ENCODE measurements at regions of chr5 and their contacts with region 1.

Region 1: GRCh38 chr5:14208071-14209021 is 65.2 kb downstream of the TRIO start:
- DNase-seq: peak; percentile 59
- H3K4me3 ChIP-seq: peak overlapping the region in 1 of 4 donors; percentile 23
- H3K27ac ChIP-seq: peak overlapping the region; percentile 84 to 89 (median 87)
- H3K4me1 ChIP-seq: peaks cover 44 to 97% (median 85%) of the 10 kb centered on the region in 4 donors
- H3K27me3 ChIP-seq: no peaks in the 10 kb centered on the region
- CTCF ChIP-seq: no peak
- EP300 ChIP-seq: no peak
- POLR2A ChIP-seq: peak; percentile 27

Region 2: GRCh38 chr5:14142827-14143548 is 65.4 kb before region 1 on chr5 and contains the start of gene TRIO:
- in situ Hi-C with region 1: loop called in 2 of 4 experiments (anchors 10 kb)
- intact Hi-C with region 1: loop called (anchors 5 kb)
- DNase-seq: peak; percentile 93
- H3K4me3 ChIP-seq: peak within 1 kb of the TSS; percentile 71 to 97 (median 78)
- H3K27ac ChIP-seq: peak within 1 kb of the TSS; percentile 95 to 99 (median 98)
- H3K4me1 ChIP-seq: peaks cover 21 to 31% (median 28%) of the 10 kb centered on the region in 4 donors
- H3K27me3 ChIP-seq: no peaks in the 10 kb centered on the region
- CTCF ChIP-seq: peak; percentile 35 to 70 (median 55)
- EP300 ChIP-seq: no peak
- POLR2A ChIP-seq: peak; percentile 43
- total RNA-seq, gene TRIO: 186 to 388 (median 285) TPM

Region 3: GRCh38 chr5:14156650-14157493 is 51.5 kb before region 1 on chr5:
- in situ Hi-C with region 1: loop called in 1 of 4 experiments (anchors 10 kb)
- intact Hi-C with region 1: no loop called
- DNase-seq: no peak
- H3K4me3 ChIP-seq: no peak overlapping the region
- H3K27ac ChIP-seq: peak overlapping the region; percentile 73 to 84 (median 81)
- H3K4me1 ChIP-seq: peaks cover 22 to 82% (median 53%) of the 10 kb centered on the region in 4 donors
- H3K27me3 ChIP-seq: no peaks in the 10 kb centered on the region
- CTCF ChIP-seq: no peak
- EP300 ChIP-seq: peak; percentile 83
- POLR2A ChIP-seq: no peak

Region 4: DNA sequence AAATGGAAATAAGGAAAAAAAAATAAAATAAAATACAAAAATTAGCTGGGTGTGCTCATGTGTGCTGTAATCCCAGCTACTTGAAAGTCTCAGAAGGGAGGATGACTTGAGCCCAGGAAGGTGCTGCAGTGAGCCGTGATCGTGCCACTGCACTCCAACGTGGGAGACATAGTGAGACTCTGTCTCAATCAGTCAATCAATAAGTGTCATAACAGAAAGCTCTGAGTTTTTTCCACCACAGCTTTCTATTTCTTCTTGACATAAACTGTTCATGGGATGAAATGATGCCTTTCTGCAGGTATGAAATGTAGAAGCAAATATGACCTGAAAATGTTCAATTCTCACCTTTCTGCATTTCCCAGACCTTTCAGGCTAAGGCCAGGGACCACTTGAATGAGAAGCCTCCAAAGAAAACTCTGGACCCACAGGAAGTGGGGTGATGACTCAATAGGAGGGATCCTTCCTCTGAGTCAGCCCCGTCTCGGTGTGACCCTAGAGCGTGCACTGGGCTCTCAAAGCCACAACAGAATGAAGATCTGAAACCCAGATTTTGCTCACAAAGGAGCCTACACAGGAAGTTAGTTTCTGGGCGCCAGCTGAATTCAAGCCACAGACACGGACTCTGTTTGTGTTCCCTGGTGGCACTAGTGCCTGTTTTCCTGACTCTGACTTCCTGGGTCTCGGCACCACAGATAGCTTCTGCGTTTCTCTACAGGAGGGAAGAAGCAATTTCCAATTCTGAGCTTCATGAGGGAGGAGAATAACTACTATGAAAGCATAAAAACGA is 601.2 kb after region 1 on chr5:
- in situ Hi-C with region 1: no loop called
- intact Hi-C with region 1: no loop called
- DNase-seq: peak; percentile 54
- H3K4me3 ChIP-seq: no peak overlapping the region
- H3K27ac ChIP-seq: peak overlapping the region; percentile 23 to 64 (median 42)
- H3K4me1 ChIP-seq: peaks cover 0 to 9% (median 0%) of the 10 kb centered on the region in 4 donors
- H3K27me3 ChIP-seq: no peaks in the 10 kb centered on the region
- CTCF ChIP-seq: no peak
- EP300 ChIP-seq: no peak
- POLR2A ChIP-seq: no peak

Measured in transverse colon (tissue), 4 donors.